IMR-90 (cell line): ENCODE measurements at regions of chrX and their contacts with region 1.

Region 1: GRCh38 chrX:41350976-41351569 is 17.1 kb downstream of the DDX3X start:
- DNase-seq: peak; percentile 22
- ATAC-seq: no peak
- H3K4me3 ChIP-seq: no peak overlapping the region
- H3K27ac ChIP-seq: no peak overlapping the region
- H3K4me1 ChIP-seq: peaks cover 2% of the 10 kb centered on the region; the same call in 1 of the 2 replicates
- H3K27me3 ChIP-seq: no peaks in the 10 kb centered on the region
- CTCF ChIP-seq: no peak
- POLR2A ChIP-seq: no peak; the same call in none of the 2 replicates
- RAD21 ChIP-seq: no peak

Region 2: DNA sequence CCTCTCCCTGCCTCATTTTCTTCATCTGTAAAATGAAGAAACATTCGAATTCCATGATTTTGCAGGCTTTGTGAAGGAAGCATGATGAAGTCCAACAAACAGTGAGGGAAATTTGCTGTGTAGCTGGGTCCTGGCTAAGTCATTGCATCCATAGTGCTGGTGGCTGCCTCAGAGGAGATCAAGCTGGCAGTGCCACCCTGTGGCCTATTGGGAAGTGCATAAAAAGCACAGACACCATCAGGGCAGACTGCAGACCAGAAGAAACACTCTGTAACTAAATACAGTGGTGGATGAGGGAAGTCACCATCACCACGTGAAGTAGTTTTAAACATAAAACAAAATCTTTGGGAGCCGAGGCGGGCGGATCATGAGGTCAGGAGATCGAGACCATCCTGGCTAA is 57.8 kb before region 1 on chrX:
- CTCF ChIA-PET with region 1: no interaction called
- POLR2A ChIA-PET with region 1: no interaction called
- dilution Hi-C with region 1: no loop called
- in situ Hi-C with region 1: no loop called
- intact Hi-C with region 1: no loop called
- DNase-seq: no peak
- ATAC-seq: peak; percentile 62
- H3K4me3 ChIP-seq: no peak overlapping the region
- H3K27ac ChIP-seq: no peak overlapping the region
- H3K4me1 ChIP-seq: no peaks in the 10 kb centered on the region
- H3K27me3 ChIP-seq: peaks cover 8% of the 10 kb centered on the region; the same call in 1 of the 2 replicates
- CTCF ChIP-seq: 0 out of 2 replicates have a peak, but pooled peaks have one; percentile 13
- POLR2A ChIP-seq: no peak
- RAD21 ChIP-seq: peak; percentile 13; the same call in 1 of the 2 replicates

Region 3: DNA sequence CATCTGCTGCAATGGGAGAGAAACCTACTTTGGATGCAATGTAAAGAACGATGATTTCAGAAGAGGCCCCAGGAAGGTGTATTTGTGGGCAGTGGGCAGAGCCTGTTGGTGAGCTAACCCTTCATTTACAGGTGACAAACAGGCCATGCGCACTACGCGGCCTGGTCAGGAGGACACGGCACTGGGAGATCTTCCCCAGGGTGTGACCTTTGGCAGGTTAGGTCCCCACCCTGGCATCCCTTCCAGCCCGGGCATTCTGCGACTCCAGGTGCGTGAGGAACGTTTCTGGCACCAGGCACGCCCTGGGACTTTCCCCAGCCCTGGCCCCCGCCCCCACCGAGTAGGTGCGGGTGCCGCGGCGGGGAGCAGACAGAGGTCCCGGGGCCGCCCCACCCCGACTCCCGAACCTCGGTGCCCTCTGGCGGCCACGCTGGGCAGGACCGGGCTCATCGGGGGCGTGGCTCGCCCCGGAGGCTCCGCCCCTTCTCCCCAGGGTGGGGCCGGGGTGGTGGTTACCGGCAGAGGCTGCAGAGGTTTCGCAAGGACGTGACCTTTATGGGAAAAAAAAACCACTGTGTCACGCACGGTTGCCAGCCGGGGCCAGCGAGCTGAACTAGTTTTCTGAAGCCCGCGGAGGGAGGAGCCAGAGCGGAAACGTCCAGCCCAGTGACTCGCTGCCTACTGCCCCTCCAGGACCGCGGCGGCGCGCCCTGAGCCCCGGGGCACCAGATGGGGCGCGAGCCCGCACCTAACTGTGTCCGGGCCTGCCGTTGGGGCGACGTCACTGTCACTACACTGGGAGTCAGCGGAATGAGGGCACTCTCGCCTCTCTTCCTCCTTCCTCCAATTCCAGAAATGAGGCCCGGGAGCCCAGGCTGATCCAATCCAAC is 91.1 kb after region 1 on chrX:
- CTCF ChIA-PET with region 1: no interaction called
- POLR2A ChIA-PET with region 1: no interaction called
- dilution Hi-C with region 1: no loop called
- in situ Hi-C with region 1: no loop called
- intact Hi-C with region 1: loop called (anchors 1 kb)
- DNase-seq: peak; percentile 55
- ATAC-seq: peak; percentile 96
- H3K4me3 ChIP-seq: peak overlapping the region; percentile 16; the same call in 1 of the 2 replicates
- H3K27ac ChIP-seq: peak overlapping the region; percentile 26
- H3K4me1 ChIP-seq: no peaks in the 10 kb centered on the region; the same call in 1 of the 2 replicates
- H3K27me3 ChIP-seq: peaks cover 5% of the 10 kb centered on the region; the same call in 1 of the 2 replicates
- CTCF ChIP-seq: peak; percentile 45
- POLR2A ChIP-seq: no peak
- RAD21 ChIP-seq: peak; percentile 45; the same call in 1 of the 2 replicates

Region 4: GRCh38 chrX:41526925-41527324 is 175.9 kb after region 1 on chrX:
- CTCF ChIA-PET with region 1: no interaction called
- POLR2A ChIA-PET with region 1: no interaction called
- dilution Hi-C with region 1: no loop called
- in situ Hi-C with region 1: no loop called
- intact Hi-C with region 1: loop called (anchors 5 kb)
- DNase-seq: peak; percentile 65
- ATAC-seq: peak; percentile 54
- H3K4me3 ChIP-seq: no peak overlapping the region
- H3K27ac ChIP-seq: no peak overlapping the region; the same call in 1 of the 2 replicates
- H3K4me1 ChIP-seq: peaks cover 2% of the 10 kb centered on the region
- H3K27me3 ChIP-seq: peaks cover 9% of the 10 kb centered on the region
- CTCF ChIP-seq: no peak
- POLR2A ChIP-seq: no peak
- RAD21 ChIP-seq: no peak